ENCODE measurements at regions of chr3 and their contacts with region 1.

Region 1: DNA sequence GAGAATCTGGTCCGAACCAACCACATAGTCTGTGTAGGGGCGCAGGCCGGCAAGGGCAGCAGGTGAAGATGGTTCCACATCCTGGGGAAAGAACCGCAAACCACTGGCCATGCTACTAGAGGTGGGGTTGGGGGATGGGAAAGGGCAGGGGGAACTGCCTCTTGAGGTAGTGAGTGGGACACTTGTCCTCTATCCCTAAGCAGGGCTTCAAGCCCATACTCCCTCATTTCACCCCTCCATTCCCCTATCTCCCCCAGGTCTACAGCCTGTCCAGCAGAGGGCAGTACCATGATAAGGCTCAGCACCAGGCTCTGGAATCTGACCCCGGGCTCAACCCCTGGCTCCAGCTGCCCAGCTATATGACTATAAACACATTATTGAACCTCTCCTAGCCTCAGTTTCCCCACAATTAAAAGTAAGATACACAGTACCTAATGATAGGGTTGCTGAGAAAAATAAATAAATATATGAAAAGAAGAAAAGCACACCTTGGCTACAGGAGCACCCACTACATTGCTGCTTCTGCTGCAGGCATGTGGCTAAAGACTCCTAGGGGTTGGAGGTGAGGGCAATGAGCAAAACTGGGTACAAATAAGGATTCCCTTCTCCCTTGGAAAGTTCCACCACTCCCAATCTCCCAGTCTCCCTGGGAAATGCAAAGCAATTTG is 6.3 kb downstream of the GORASP1 start:
- DNase-seq: no peak
- ATAC-seq: peak; percentile 90
- H3K4me3 Mint-ChIP-seq: no peak overlapping the region
- H3K27ac Mint-ChIP-seq: no peak overlapping the region
- H3K4me1 Mint-ChIP-seq: peaks cover 42% of the 10 kb centered on the region
- H3K27me3 Mint-ChIP-seq: no peaks in the 10 kb centered on the region
- CTCF ChIP-seq: peak; percentile 44

Region 2: GRCh38 chr3:39051647-39052561 is 49.3 kb before region 1 on chr3 and contains the starts of genes SCN11A and WDR48:
- CTCF ChIA-PET with region 1: no interaction called
- POLR2A ChIA-PET with region 1: no interaction called
- intact Hi-C with region 1: no loop called
- DNase-seq: peak; percentile 80
- ATAC-seq: peak; percentile 94
- H3K4me3 Mint-ChIP-seq: peak within 1 kb of the TSS; percentile 97
- H3K27ac Mint-ChIP-seq: peak within 1 kb of the TSS; percentile 98
- H3K4me1 Mint-ChIP-seq: peaks cover 39% of the 10 kb centered on the region
- H3K27me3 Mint-ChIP-seq: no peaks in the 10 kb centered on the region
- CTCF ChIP-seq: no peak
- total RNA-seq, gene SCN11A: 0.16 and 0.20 TPM in 2 replicates
- total RNA-seq, gene WDR48: 47.7 and 48.9 TPM in 2 replicates

Region 3: GRCh38 chr3:39378088-39378487 is 276.9 kb after region 1 on chr3:
- CTCF ChIA-PET with region 1: no interaction called
- POLR2A ChIA-PET with region 1: no interaction called
- intact Hi-C with region 1: loop called (anchors 1 kb)
- DNase-seq: no peak
- ATAC-seq: peak; percentile 71
- H3K4me3 Mint-ChIP-seq: no peak overlapping the region
- H3K27ac Mint-ChIP-seq: no peak overlapping the region
- H3K4me1 Mint-ChIP-seq: peaks cover 8% of the 10 kb centered on the region
- H3K27me3 Mint-ChIP-seq: no peaks in the 10 kb centered on the region
- CTCF ChIP-seq: peak; percentile 64

Measured in activated B cell treated with CpG ODN at 0.5 μM for 24 hours (primary cell).